Activated B cell treated with CpG ODN at 0.5 μM for 24 hours (primary cell): ENCODE measurements at regions of chr15 and their contacts with region 1.

Region 1: DNA sequence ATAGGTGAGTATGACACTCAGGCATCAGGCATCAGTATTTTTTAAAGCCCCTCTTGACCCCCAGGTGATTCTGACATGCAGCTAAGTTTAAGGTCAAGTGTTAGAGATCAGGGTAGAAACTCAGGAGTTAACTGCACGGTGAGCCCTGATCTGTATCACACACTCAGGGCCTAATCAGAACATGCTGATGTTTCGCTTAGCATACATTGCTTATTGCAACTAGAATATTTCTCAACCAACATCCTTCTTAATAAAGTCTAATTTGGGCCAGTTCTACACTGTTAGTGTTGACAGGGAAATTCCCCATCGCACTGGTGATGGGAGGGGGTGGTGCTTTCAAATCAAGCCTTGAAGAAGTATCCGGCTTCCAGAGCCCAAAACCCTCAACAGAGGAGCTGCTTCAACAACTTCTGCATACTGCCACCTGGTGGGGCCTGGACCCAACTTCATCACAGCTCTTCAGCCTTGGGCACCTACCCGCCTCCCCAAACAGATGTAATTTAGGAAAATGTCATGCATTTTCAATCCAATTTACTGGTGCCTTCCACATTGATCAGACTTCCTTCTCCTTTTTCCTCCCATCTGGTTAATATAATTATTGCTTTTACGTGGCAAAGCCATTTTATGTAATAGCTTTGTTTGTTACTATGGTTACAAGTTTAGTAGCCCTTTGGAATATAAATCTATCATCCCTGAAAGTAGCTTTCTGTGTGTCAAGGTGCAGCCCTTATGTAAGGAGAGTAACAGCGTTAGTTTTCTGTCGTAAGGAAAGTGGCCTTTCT is 312.2 kb downstream of the RORA start:
- DNase-seq: peak; percentile 47
- ATAC-seq: peak; percentile 97
- H3K4me3 Mint-ChIP-seq: peak overlapping the region; percentile 58
- H3K27ac Mint-ChIP-seq: peak overlapping the region; percentile 39
- H3K4me1 Mint-ChIP-seq: peaks cover 15% of the 10 kb centered on the region
- H3K27me3 Mint-ChIP-seq: no peaks in the 10 kb centered on the region
- CTCF ChIP-seq: peak; percentile 42

Region 2: GRCh38 chr15:60096157-60096556 is 820.7 kb before region 1 on chr15:
- CTCF ChIA-PET with region 1: no interaction called
- POLR2A ChIA-PET with region 1: no interaction called
- intact Hi-C with region 1: no loop called
- DNase-seq: no peak
- ATAC-seq: no peak
- H3K4me3 Mint-ChIP-seq: no peak overlapping the region
- H3K27ac Mint-ChIP-seq: no peak overlapping the region
- H3K4me1 Mint-ChIP-seq: no peaks in the 10 kb centered on the region
- H3K27me3 Mint-ChIP-seq: peaks cover 6% of the 10 kb centered on the region
- CTCF ChIP-seq: no peak

Region 3: DNA sequence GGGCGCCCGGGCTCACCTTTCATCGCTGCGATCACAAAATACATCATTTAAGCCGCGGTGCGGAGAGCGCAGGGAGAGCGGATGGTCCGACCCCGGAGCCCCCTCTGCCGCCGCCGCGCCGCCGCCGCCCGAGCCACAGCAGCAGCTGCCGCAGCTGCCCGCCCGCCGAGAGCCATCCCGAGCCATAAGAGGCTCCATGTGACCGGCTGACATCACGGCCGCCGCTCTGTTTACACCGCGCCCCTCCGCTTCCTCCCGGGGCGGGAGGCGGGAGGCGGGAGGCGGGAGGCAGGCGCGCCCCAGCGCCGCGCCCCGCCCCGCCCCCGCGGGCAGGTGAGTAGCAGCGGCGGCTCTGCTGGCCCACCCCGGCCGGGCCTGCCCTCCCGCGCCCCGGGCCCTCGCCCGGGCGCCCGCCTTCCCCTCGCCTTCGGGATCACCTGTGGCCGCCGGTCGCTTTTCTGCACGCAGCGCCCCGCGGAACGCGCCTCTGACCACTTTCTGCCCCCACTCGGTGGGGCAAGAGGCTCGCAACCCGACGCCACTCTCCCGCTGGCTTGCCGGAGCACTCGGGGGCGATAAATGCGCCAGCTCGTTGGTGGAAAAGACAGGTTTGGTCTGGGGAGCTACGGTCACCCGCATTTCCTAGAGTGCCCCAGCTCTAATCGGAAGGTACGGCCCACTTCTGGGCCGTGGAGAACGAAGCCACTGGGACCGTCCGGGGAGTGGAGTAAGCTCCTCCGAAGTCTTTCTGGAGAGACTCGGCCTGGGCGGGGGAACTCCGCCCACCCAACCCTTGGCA is 324.3 kb before region 1 on chr15:
- CTCF ChIA-PET with region 1: interaction called, 127 read pairs
- POLR2A ChIA-PET with region 1: interaction called, 4 read pairs
- intact Hi-C with region 1: loop called (anchors 1 kb)
- DNase-seq: peak; percentile 62
- ATAC-seq: peak; percentile 87
- H3K4me3 Mint-ChIP-seq: peak overlapping the region; percentile 84
- H3K27ac Mint-ChIP-seq: no peak overlapping the region
- H3K4me1 Mint-ChIP-seq: peaks cover 11% of the 10 kb centered on the region
- H3K27me3 Mint-ChIP-seq: peaks cover 35% of the 10 kb centered on the region
- CTCF ChIP-seq: no peak

Region 4: GRCh38 chr15:60635507-60636352 is 281.1 kb before region 1 on chr15:
- CTCF ChIA-PET with region 1: no interaction called
- POLR2A ChIA-PET with region 1: no interaction called
- intact Hi-C with region 1: loop called (anchors 1 kb)
- DNase-seq: no peak
- ATAC-seq: peak; percentile 95
- H3K4me3 Mint-ChIP-seq: peak overlapping the region; percentile 5
- H3K27ac Mint-ChIP-seq: peak overlapping the region; percentile 20
- H3K4me1 Mint-ChIP-seq: peaks cover 22% of the 10 kb centered on the region
- H3K27me3 Mint-ChIP-seq: no peaks in the 10 kb centered on the region
- CTCF ChIP-seq: no peak

Region 5: GRCh38 chr15:60673918-60674558 is 242.8 kb before region 1 on chr15:
- CTCF ChIA-PET with region 1: interaction called, 3 read pairs
- POLR2A ChIA-PET with region 1: no interaction called
- intact Hi-C with region 1: loop called (anchors 10 kb)
- DNase-seq: no peak
- ATAC-seq: no peak
- H3K4me3 Mint-ChIP-seq: no peak overlapping the region
- H3K27ac Mint-ChIP-seq: no peak overlapping the region
- H3K4me1 Mint-ChIP-seq: peaks cover 3% of the 10 kb centered on the region
- H3K27me3 Mint-ChIP-seq: peaks cover 2% of the 10 kb centered on the region
- CTCF ChIP-seq: no peak

Region 6: DNA sequence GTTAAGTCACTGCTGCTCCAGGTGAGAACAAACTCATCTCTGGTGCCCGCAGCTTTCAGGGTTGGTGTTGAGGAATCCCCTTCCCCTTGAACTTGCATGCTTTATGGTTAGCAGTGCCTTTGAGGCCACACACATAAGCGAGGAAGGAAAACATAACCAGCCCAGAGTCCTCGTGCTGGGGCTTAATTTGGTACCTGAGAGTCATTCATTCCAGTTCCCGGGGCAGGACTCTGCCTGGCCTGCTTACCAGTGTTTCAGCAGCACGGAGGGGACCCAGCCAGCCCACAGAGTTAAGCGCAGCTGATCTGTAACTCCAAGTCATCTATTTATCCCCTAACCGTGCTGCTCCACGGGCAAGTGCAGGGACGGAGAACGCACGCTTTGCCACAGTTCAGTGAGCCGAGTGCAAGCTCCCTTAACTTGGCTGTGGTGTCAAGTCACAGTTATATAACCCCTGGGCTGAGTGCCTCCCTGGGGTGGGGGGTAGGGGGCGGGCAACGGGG is 135.6 kb before region 1 on chr15:
- CTCF ChIA-PET with region 1: no interaction called
- POLR2A ChIA-PET with region 1: no interaction called
- intact Hi-C with region 1: no loop called
- DNase-seq: no peak
- ATAC-seq: no peak
- H3K4me3 Mint-ChIP-seq: no peak overlapping the region
- H3K27ac Mint-ChIP-seq: no peak overlapping the region
- H3K4me1 Mint-ChIP-seq: peaks cover 13% of the 10 kb centered on the region
- H3K27me3 Mint-ChIP-seq: peaks cover 2% of the 10 kb centered on the region
- CTCF ChIP-seq: no peak

Region 7: GRCh38 chr15:60941444-60941843 is 24.6 kb after region 1 on chr15:
- CTCF ChIA-PET with region 1: no interaction called
- POLR2A ChIA-PET with region 1: no interaction called
- intact Hi-C with region 1: no loop called
- DNase-seq: no peak
- ATAC-seq: no peak
- H3K4me3 Mint-ChIP-seq: no peak overlapping the region
- H3K27ac Mint-ChIP-seq: no peak overlapping the region
- H3K4me1 Mint-ChIP-seq: no peaks in the 10 kb centered on the region
- H3K27me3 Mint-ChIP-seq: peaks cover 13% of the 10 kb centered on the region
- CTCF ChIP-seq: no peak

Region 8: GRCh38 chr15:60982249-60982910 is 65.5 kb after region 1 on chr15:
- CTCF ChIA-PET with region 1: no interaction called
- POLR2A ChIA-PET with region 1: no interaction called
- intact Hi-C with region 1: no loop called
- DNase-seq: no peak
- ATAC-seq: no peak
- H3K4me3 Mint-ChIP-seq: no peak overlapping the region
- H3K27ac Mint-ChIP-seq: no peak overlapping the region
- H3K4me1 Mint-ChIP-seq: no peaks in the 10 kb centered on the region
- H3K27me3 Mint-ChIP-seq: peaks cover 9% of the 10 kb centered on the region
- CTCF ChIP-seq: no peak